WTC11 (cell line): ENCODE measurements at regions of chr12 and their contacts with region 1.

Region 1: GRCh38 chr12:133181238-133181959 is at the start of gene ZNF268:
- DNase-seq: peak; percentile 98
- ATAC-seq: peak; percentile 99
- H3K4me3 Mint-ChIP-seq: peak within 1 kb of the TSS; percentile 98
- H3K27ac Mint-ChIP-seq: peak within 1 kb of the TSS; percentile 96
- H3K4me1 Mint-ChIP-seq: 0 out of 2 replicates have a peak, but pooled peaks cover 6% of the 10 kb centered on the region
- H3K27me3 Mint-ChIP-seq: peaks cover 7% of the 10 kb centered on the region; the same call in 1 of the 2 replicates
- CTCF ChIP-seq: peak; percentile 65
- total RNA-seq, gene ZNF268: 17.3 to 25.3 TPM (median 21.3 TPM) in 3 replicates

Region 2: GRCh38 chr12:132986001-132986912 is 195.1 kb before region 1 on chr12 and contains the start of gene ZNF26:
- CTCF ChIA-PET with region 1: interaction called, 18 read pairs
- POLR2A ChIA-PET with region 1: no interaction called
- DNase-seq: peak; percentile 92
- ATAC-seq: peak; percentile 98
- H3K4me3 Mint-ChIP-seq: peak within 1 kb of the TSS; percentile 90
- H3K27ac Mint-ChIP-seq: peak within 1 kb of the TSS; percentile 53
- H3K4me1 Mint-ChIP-seq: peaks cover 13% of the 10 kb centered on the region
- H3K27me3 Mint-ChIP-seq: no peaks in the 10 kb centered on the region; the same call in 1 of the 2 replicates
- CTCF ChIP-seq: no peak
- total RNA-seq, gene ZNF26: 11.9 to 14.6 TPM (median 13.5 TPM) in 3 replicates

Region 3: DNA sequence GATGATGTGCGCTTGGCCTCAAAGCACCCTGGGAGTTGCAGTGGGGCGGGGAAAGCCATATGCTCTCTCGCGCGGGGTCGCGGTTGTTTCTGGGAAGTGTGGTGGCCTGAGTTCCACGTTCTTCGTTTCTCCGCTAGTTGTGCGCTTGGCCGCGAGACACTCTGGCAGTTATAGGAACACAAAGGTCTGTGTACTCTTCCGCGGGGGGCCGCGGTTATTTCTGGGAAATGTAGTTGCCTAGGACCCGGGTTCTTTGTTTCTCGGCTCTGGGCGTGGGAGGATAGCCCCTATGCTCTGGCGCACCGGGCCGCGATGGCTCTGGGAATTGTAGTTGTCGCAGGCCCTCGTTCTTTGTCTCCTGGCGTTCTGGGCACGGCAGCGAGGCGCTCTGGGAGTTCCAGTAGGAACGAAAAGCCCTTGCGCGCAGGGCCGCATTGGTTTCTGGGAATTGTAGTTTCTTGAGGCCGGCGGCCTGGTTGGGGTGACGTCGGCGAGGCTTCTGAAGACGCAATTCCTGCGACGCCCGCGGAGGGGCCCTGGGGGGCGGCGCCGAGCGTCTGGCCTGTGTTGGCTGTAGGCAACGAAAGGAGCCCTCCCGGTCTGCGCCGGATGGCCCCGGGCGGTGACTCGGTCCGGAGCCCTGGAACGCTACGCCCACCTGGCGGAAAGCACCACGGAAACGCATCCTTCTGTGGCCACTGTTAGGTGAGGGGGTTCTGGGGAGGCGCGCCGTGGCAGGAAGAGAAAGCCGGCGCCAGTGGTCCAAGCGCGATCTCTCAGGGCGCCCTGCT is 100.8 kb before region 1 on chr12 and contains the start of gene ZNF140:
- CTCF ChIA-PET with region 1: interaction called, 16 read pairs
- POLR2A ChIA-PET with region 1: interaction called, 5 read pairs
- DNase-seq: peak; percentile 98
- ATAC-seq: peak; percentile 77
- H3K4me3 Mint-ChIP-seq: no peak within 1 kb of the TSS
- H3K27ac Mint-ChIP-seq: peak within 1 kb of the TSS; percentile 84
- H3K4me1 Mint-ChIP-seq: peaks cover 3% of the 10 kb centered on the region; the same call in 1 of the 2 replicates
- H3K27me3 Mint-ChIP-seq: peaks cover 7% of the 10 kb centered on the region
- CTCF ChIP-seq: no peak; the same call in 1 of the 2 replicates
- total RNA-seq, gene ZNF140: 10.3 to 13.8 TPM (median 12.8 TPM) in 3 replicates

Region 4: GRCh38 chr12:133120385-133121191 is 60.8 kb before region 1 on chr12:
- CTCF ChIA-PET with region 1: no interaction called
- POLR2A ChIA-PET with region 1: no interaction called
- DNase-seq: no peak
- ATAC-seq: no peak
- H3K4me3 Mint-ChIP-seq: no peak overlapping the region
- H3K27ac Mint-ChIP-seq: no peak overlapping the region
- H3K4me1 Mint-ChIP-seq: no peaks in the 10 kb centered on the region
- H3K27me3 Mint-ChIP-seq: peaks cover 11% of the 10 kb centered on the region
- CTCF ChIP-seq: no peak

Region 5: GRCh38 chr12:133192847-133193246 is 11.4 kb after region 1 on chr12:
- CTCF ChIA-PET with region 1: no interaction called
- POLR2A ChIA-PET with region 1: no interaction called
- DNase-seq: no peak
- ATAC-seq: no peak
- H3K4me3 Mint-ChIP-seq: no peak overlapping the region
- H3K27ac Mint-ChIP-seq: no peak overlapping the region
- H3K4me1 Mint-ChIP-seq: no peaks in the 10 kb centered on the region
- H3K27me3 Mint-ChIP-seq: no peaks in the 10 kb centered on the region
- CTCF ChIP-seq: no peak